Activated T-helper 1 cell treated with anti-CD3 and anti-CD28 coated beads, Interleukin-12 subunit alpha, Interleukin-12 subunit beta, Interleukin-2, Interleukin-4 antibody, amounts not matched to agents 30 ng/mL and 10 ng/mL and 1 ng/mL, durations not matched to agents 14 hours and 24 hours and 36 hours (primary cell): ENCODE measurements at regions of chr12 and their contacts with region 1.

Region 1: DNA sequence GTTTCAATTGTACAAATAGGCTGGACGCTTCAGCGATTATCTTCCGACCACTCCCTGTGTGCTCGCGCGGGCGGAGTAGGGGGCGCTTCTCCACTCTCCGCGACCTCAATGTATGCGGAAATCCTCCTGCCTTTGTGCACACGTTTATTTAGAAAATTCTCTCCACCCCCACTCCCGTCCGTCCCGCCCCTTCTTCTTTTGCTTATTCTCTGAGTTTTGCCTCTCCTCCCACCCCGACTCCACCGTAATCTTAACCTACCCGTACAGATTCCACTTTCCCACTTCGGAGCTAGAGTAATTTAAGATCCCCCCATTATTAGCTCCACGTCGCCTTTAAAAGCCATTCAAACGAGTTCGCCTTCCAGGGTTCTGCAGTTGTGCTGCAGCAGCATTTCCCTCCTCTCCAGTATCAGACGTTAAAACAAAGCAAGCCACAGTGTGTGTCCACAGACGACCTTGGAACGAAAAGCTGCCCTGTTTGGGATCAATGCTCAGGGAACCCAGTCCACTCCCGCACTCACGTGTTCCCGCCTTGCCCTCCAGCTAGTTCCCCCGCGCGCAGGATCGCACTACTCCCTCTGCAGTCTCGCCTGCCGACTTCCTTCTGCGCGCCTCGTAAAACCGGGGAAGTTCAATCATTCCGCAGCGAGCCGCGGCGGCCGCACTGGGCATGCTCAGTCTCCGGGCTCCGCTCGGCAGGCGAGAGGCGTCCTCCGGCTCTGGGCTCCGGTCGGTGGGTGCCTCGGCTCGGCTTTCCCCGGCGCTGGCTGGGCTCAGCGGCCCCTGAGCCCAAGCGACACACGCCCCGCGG is at the start of gene ANO6:
- DNase-seq: peak; percentile 78
- H3K4me3 Mint-ChIP-seq: peak within 1 kb of the TSS; percentile 92
- H3K27ac Mint-ChIP-seq: peak within 1 kb of the TSS; percentile 95
- H3K4me1 Mint-ChIP-seq: peaks cover 43% of the 10 kb centered on the region
- H3K27me3 Mint-ChIP-seq: peaks cover 1% of the 10 kb centered on the region
- total RNA-seq, gene ANO6: 21.7 and 22.1 TPM in 2 replicates

Region 2: GRCh38 chr12:45148006-45148405 is 67.6 kb before region 1 on chr12:
- intact Hi-C with region 1: no loop called
- DNase-seq: no peak
- H3K4me3 Mint-ChIP-seq: no peak overlapping the region
- H3K27ac Mint-ChIP-seq: no peak overlapping the region
- H3K4me1 Mint-ChIP-seq: no peaks in the 10 kb centered on the region
- H3K27me3 Mint-ChIP-seq: no peaks in the 10 kb centered on the region

Region 3: GRCh38 chr12:45170456-45171042 is 45.1 kb before region 1 on chr12:
- intact Hi-C with region 1: loop called (anchors 1 kb)
- DNase-seq: peak; percentile 57
- H3K4me3 Mint-ChIP-seq: no peak overlapping the region
- H3K27ac Mint-ChIP-seq: no peak overlapping the region
- H3K4me1 Mint-ChIP-seq: no peaks in the 10 kb centered on the region
- H3K27me3 Mint-ChIP-seq: peaks cover 7% of the 10 kb centered on the region

Region 4: GRCh38 chr12:45192707-45193106 is 22.9 kb before region 1 on chr12:
- intact Hi-C with region 1: loop called (anchors 1 kb)
- DNase-seq: no peak
- H3K4me3 Mint-ChIP-seq: no peak overlapping the region
- H3K27ac Mint-ChIP-seq: no peak overlapping the region
- H3K4me1 Mint-ChIP-seq: peaks cover 17% of the 10 kb centered on the region
- H3K27me3 Mint-ChIP-seq: no peaks in the 10 kb centered on the region

Region 5: DNA sequence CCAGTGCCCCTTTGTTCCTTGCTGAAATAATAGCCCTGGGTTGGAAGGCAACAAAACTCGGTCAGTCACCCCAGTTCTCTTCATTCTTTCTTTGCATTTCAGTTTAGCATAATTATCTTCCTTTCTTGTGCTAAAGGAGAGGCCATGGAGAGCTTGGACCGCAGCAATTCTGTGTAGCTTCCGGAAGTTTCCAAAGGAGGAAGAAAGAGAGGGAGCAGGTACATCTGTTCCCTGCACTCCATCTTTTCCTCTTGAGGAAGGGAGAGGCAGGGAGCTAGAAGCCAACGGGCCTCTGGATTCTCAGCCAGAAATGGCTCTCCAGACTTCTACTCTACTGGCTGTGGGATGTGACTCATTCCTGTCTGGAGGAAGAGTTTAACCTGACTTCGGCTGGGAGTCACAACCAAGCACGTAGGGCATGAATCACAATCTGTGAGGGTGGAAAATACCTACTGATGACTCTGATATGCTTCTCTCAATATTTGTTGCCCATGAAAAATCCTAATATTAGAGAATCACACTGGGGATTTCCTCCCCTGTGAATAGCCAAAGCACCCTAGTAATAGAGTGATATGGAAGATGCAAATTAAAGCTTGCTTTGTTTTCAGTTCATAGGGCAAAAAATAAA is 17.2 kb after region 1 on chr12:
- intact Hi-C with region 1: loop called (anchors 1 kb)
- DNase-seq: no peak
- H3K4me3 Mint-ChIP-seq: no peak overlapping the region
- H3K27ac Mint-ChIP-seq: no peak overlapping the region
- H3K4me1 Mint-ChIP-seq: peaks cover 52% of the 10 kb centered on the region
- H3K27me3 Mint-ChIP-seq: no peaks in the 10 kb centered on the region

Region 6: GRCh38 chr12:45268672-45269411 is 53.2 kb after region 1 on chr12:
- intact Hi-C with region 1: loop called (anchors 5 kb)
- DNase-seq: no peak
- H3K4me3 Mint-ChIP-seq: no peak overlapping the region
- H3K27ac Mint-ChIP-seq: no peak overlapping the region
- H3K4me1 Mint-ChIP-seq: peaks cover 15% of the 10 kb centered on the region
- H3K27me3 Mint-ChIP-seq: no peaks in the 10 kb centered on the region